AG04449 (cell line): ENCODE measurements at regions of chr3 and their contacts with region 1.

Region 1: DNA sequence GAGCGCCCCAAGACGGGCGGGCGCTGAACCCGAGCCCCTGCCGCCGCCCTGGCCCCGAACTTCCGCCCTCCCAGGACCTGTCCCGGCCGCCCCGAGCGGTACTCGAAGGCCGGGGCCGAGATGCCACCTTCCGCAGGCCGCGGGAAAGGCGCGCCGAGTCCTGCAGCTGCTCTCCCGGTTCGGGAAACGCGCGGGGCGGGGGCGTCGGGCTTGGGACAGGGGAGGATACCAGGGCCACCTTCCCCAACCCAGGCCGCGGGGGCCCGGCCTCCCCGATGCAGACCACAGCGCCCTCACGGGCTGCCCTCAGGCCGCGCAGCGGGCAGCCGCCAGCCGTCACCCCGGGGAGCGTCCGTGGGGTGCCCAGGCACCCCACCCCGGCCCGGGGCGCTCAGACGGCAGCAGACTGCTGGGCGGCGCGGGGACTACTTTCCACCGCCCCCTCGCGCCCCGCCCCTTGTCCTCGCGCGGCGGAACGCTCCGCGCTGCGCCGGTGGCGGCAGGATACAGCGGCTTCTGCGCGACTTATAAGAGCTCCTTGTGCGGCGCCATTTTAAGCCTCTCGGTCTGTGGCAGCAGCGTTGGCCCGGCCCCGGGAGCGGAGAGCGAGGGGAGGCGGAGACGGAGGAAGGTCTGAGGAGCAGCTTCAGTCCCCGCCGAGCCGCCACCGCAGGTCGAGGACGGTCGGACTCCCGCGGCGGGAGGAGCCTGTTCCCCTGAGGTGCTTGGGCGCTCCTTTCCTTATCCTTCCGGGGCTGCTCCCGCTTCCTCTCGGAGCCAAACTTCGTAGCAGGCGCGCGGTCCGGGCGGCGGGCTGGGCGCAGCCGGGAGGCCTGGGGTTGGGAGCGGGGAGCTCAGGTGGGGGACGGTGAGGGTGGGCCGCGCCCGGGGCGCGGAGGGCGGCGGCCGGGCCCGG is at the start of gene CTNNB1:
- DNase-seq: peak; percentile 77
- H3K4me3 ChIP-seq: peak within 1 kb of the TSS; percentile 93
- CTCF ChIP-seq: no peak

Region 2: DNA sequence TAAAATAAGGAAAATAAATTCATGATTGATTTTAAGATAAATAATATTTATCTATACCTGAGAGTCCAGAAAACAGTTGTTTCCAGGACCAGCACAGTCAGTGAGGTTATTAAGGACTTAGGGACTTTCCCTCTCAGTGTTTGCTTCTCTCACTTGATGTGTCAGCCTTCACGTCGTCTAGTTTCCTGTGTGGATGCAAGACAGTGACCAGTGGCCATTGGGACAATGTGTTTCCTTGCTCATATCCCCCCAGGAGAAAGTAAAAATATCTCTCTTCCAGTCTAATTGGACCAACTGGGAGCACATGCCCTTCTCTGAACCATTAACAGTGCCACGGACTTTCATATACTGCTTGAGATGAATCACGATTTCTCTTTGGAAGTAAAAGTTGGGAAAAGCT is 157.7 kb before region 1 on chr3:
- CTCF ChIA-PET with region 1: no interaction called
- POLR2A ChIA-PET with region 1: no interaction called
- DNase-seq: no peak
- H3K4me3 ChIP-seq: no peak overlapping the region
- CTCF ChIP-seq: no peak

Region 3: GRCh38 chr3:41213588-41213987 is 14.4 kb after region 1 on chr3:
- CTCF ChIA-PET with region 1: interaction called, 10 read pairs
- POLR2A ChIA-PET with region 1: interaction called, 7 read pairs
- DNase-seq: no peak
- H3K4me3 ChIP-seq: no peak overlapping the region
- CTCF ChIP-seq: no peak

Region 4: DNA sequence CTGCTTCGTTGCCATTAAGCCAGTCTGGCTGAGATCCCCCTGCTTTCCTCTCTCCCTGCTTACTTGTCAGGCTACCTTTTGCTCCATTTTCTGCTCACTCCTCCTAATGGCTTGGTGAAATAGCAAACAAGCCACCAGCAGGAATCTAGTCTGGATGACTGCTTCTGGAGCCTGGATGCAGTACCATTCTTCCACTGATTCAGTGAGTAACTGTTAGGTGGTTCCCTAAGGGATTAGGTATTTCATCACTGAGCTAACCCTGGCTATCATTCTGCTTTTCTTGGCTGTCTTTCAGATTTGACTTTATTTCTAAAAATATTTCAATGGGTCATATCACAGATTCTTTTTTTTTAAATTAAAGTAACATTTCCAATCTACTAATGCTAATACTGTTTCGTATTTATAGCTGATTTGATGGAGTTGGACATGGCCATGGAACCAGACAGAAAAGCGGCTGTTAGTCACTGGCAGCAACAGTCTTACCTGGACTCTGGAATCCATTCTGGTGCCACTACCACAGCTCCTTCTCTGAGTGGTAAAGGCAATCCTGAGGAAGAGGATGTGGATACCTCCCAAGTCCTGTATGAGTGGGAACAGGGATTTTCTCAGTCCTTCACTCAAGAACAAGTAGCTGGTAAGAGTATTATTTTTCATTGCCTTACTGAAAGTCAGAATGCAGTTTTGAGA is 25.1 kb after region 1 on chr3:
- CTCF ChIA-PET with region 1: interaction called, 3 read pairs
- POLR2A ChIA-PET with region 1: interaction called, 12 read pairs
- DNase-seq: peak; percentile 82
- H3K4me3 ChIP-seq: no peak overlapping the region
- CTCF ChIP-seq: no peak

Region 5: DNA sequence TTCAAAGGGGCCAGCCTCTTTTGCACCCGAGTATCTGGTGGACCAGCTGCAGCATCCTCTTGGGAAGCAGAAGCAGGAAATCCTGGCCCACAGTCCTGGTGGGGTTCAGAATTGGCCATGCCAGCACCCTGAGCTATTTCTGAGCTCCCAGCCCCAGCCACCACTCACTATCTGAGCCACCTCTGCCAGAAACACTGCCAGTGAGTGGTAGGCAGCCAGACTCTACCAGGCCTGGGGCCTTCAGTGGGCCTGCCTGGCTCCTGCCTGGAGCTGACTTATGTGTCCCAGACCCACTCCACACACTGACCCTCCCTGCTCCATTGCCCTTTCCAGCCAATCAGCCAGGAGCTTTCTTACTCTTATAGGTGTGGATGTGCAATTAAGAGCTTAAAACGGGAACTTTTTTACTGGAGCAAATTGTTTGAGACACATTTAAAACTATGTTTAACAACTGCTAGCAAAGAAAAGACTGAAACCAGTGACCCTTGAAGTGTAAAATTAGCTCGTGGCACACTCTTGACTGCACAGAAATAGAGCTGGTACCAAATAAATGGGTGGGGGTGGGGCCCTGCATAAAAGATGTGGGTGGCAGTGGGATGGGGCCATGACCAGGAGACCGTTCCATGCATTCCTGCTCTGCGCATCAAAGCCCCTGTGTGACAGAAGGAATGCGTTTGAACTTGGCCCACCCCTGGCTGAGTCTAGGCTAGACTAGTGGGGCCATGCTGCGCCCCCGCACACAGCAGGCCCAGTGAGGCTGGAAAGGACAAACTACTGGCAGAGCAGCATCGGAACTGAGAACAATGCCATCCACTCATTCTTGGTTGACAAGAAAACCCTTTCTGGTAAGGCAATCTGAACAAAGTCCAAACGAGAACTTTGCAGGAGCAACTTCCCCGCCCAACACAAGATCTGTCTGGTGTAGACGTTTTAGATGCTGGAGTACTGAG is 48.1 kb after region 1 on chr3:
- CTCF ChIA-PET with region 1: no interaction called
- POLR2A ChIA-PET with region 1: interaction called, 13 read pairs
- DNase-seq: no peak
- H3K4me3 ChIP-seq: no peak overlapping the region
- CTCF ChIP-seq: no peak